ENCODE measurements at regions of chr3 and their contacts with region 1.

Region 1: GRCh38 chr3:186520957-186521842 is 23.0 kb downstream of the CRYGS start:
- DNase-seq: no peak
- ATAC-seq: no peak
- H3K4me3 ChIP-seq: no peak overlapping the region
- H3K4me3 Mint-ChIP-seq: no peak overlapping the region
- H3K27ac ChIP-seq: no peak overlapping the region
- H3K27ac Mint-ChIP-seq: peak overlapping the region in 1 of 2 donors; percentile 1
- H3K4me1 ChIP-seq: peaks cover 42 to 51% of the 10 kb centered on the region in 2 experiments
- H3K4me1 Mint-ChIP-seq: peaks cover 41 to 58% (median 51%) of the 10 kb centered on the region in 3 donors
- H3K27me3 ChIP-seq: no peaks in the 10 kb centered on the region
- H3K27me3 Mint-ChIP-seq: no peaks in the 10 kb centered on the region

Region 2: GRCh38 chr3:186534113-186534669 is 13.0 kb after region 1 on chr3:
- CTCF ChIA-PET with region 1: interaction called, 3 to 51 read pairs
- POLR2A ChIA-PET with region 1: interaction called, 3 to 5 read pairs
- DNase-seq: peak in 21 of 35 experiments; percentile 5 to 74 (median 22)
- ATAC-seq: peak; percentile 58 to 98 (median 82)
- H3K4me3 ChIP-seq: no peak overlapping the region
- H3K4me3 Mint-ChIP-seq: peak overlapping the region in 2 of 3 donors; percentile 10 to 25
- H3K27ac ChIP-seq: peak overlapping the region; percentile 17
- H3K27ac Mint-ChIP-seq: peak overlapping the region in 1 of 2 donors; percentile 62
- H3K4me1 ChIP-seq: peaks cover 27 to 29% of the 10 kb centered on the region in 2 experiments
- H3K4me1 Mint-ChIP-seq: peaks cover 34 to 43% (median 36%) of the 10 kb centered on the region in 3 donors
- H3K27me3 ChIP-seq: no peaks in the 10 kb centered on the region
- H3K27me3 Mint-ChIP-seq: no peaks in the 10 kb centered on the region

Region 3: GRCh38 chr3:186564586-186564985 is 43.4 kb after region 1 on chr3:
- CTCF ChIA-PET with region 1: no interaction called
- POLR2A ChIA-PET with region 1: no interaction called
- DNase-seq: no peak
- ATAC-seq: no peak
- H3K4me3 ChIP-seq: no peak overlapping the region
- H3K4me3 Mint-ChIP-seq: peak overlapping the region in 1 of 3 donors; percentile 18
- H3K27ac ChIP-seq: no peak overlapping the region
- H3K27ac Mint-ChIP-seq: no peak overlapping the region
- H3K4me1 ChIP-seq: peaks cover 16 to 25% of the 10 kb centered on the region in 2 experiments
- H3K4me1 Mint-ChIP-seq: peaks cover 73 to 79% (median 77%) of the 10 kb centered on the region in 3 donors
- H3K27me3 ChIP-seq: no peaks in the 10 kb centered on the region
- H3K27me3 Mint-ChIP-seq: no peaks in the 10 kb centered on the region